ENCODE measurements at regions of chr10 and their contacts with region 1.

Region 1: DNA sequence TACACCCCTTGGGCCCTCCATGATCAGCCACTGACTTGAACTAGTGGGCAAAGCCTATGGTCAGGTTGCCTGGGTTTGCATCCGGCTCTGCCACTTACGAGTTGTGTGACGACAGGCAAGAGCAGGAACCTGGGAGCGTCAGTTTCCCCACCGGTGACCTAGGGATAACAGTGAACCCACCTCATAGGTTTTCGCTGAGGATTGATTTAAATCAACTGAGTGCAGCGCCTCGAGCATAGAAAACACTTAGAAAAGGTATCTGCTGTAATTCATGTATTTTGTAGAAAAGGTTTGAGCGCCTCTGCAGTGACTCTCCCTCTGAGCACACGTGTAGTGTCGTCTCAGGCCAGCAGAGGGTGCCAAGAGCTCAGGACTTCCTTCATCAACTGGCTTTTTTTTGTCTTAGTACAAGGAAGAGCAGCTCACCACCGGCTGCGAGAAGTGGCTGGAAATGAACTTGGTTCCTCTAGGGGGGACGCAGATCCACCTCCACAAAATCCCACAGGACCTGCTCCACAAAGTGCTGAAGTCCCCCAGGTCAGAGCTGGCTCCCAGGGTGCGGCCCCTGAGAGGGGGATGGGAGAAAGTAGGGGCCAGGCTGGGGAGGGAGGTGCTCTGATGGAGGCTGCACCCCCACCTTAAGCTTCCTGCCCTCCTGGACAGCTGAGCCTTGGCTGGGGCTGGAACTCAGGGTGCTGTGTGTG is 27.7 kb downstream of the BTBD16 start:
- DNase-seq: peak; percentile 80
- H3K4me3 ChIP-seq: peak overlapping the region; percentile 1 to 42; a peak in 2 of 4 replicates
- H3K27ac ChIP-seq: no peak overlapping the region
- H3K4me1 ChIP-seq: no peaks in the 10 kb centered on the region; a peak in 1 of 4 replicates
- H3K27me3 ChIP-seq: no peaks in the 10 kb centered on the region; the same call in 1 of the 2 replicates
- CTCF ChIP-seq: peak; percentile 89
- EP300 ChIP-seq: no peak
- RAD21 ChIP-seq: peak; percentile 95

Region 2: DNA sequence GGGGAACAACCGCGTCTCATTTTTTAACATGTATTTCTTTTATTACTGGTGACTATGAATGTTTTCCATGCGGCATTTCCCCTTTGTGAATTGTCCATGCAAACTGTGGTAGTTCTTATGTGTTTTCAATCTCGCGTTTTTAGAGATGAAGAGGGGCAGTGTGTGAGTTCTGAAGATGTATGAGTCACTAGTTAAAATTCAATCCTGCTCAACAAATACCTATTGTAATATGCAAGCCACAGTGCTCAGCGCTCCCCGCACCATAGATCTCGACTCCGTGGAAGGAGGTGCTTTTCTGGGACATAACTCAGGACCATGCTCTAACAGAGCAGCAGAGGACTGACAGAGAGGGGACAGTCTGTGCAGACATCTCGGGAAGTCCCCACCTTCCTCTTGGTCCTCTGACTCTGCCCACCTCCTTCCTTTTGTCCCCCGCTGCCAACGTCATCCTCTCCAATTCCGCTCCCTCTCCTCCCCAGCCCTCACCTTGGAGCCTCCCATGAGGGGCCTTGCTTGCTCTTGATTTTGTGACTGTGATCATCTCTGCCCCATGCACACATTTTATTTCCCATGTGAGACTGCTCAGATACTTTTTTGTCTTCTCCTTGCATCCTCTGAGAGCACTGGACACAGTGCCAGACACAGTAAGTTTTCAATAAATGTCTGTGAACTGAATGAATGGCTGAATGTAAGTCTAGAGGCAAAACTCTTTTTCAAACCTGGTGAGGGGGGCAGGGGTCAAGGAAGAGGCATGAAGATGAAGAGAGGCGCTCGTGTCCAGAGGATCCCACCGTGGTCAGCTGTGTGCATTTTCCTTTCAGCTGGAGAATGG is 33.1 kb after region 1 on chr10:
- CTCF ChIA-PET with region 1: interaction called, 18 read pairs
- POLR2A ChIA-PET with region 1: no interaction called
- DNase-seq: no peak
- H3K4me3 ChIP-seq: no peak overlapping the region
- H3K27ac ChIP-seq: no peak overlapping the region
- H3K4me1 ChIP-seq: no peaks in the 10 kb centered on the region
- H3K27me3 ChIP-seq: no peaks in the 10 kb centered on the region; the same call in 1 of the 2 replicates
- CTCF ChIP-seq: no peak
- EP300 ChIP-seq: no peak
- RAD21 ChIP-seq: no peak

Region 3: GRCh38 chr10:122413325-122413724 is 114.6 kb after region 1 on chr10:
- CTCF ChIA-PET with region 1: interaction called, 10 read pairs
- POLR2A ChIA-PET with region 1: no interaction called
- DNase-seq: no peak
- H3K4me3 ChIP-seq: no peak overlapping the region
- H3K27ac ChIP-seq: no peak overlapping the region
- H3K4me1 ChIP-seq: peaks cover 5% of the 10 kb centered on the region in 2 experiments; a peak in 3 of 4 replicates
- H3K27me3 ChIP-seq: no peaks in the 10 kb centered on the region
- CTCF ChIP-seq: no peak
- EP300 ChIP-seq: no peak
- RAD21 ChIP-seq: no peak

Region 4: GRCh38 chr10:122557516-122557915 is 258.8 kb after region 1 on chr10:
- CTCF ChIA-PET with region 1: interaction called, 59 read pairs
- POLR2A ChIA-PET with region 1: no interaction called
- DNase-seq: no peak
- H3K4me3 ChIP-seq: no peak overlapping the region
- H3K27ac ChIP-seq: no peak overlapping the region
- H3K4me1 ChIP-seq: no peaks in the 10 kb centered on the region; a peak in 1 of 4 replicates
- H3K27me3 ChIP-seq: 0 out of 2 replicates have a peak, but pooled peaks cover 1% of the 10 kb centered on the region
- CTCF ChIP-seq: no peak
- EP300 ChIP-seq: no peak
- RAD21 ChIP-seq: no peak

Measured in SK-N-SH (cell line).